Heart right ventricle (tissue), 16 donors: ENCODE measurements at regions of chr12 and their contacts with region 1.

Region 1: DNA sequence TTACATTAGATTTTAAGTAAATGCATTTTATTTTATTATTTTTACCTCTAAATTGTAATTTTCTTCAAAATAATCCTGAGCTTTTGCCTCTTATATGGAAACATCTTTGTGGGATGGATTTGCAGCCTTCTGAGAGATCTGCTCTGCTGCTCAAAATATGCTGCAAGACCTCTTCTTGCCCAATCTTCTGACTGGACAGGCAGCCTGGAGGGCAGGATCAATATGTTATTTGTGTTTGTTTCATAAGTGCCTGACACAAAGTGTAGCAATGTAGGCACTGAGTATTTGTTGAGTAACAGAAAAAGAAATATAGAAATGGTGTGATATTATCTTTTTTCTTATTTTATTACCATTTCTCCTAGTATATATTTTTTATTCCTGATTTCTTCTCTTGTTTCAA is 1106.9 kb downstream of the TMTC2 start:
- DNase-seq: no peak
- ATAC-seq: no peak
- H3K4me3 ChIP-seq: no peak overlapping the region
- H3K27ac ChIP-seq: no peak overlapping the region
- H3K4me1 ChIP-seq: no peaks in the 10 kb centered on the region
- H3K27me3 ChIP-seq: no peaks in the 10 kb centered on the region
- CTCF ChIP-seq: no peak

Region 2: DNA sequence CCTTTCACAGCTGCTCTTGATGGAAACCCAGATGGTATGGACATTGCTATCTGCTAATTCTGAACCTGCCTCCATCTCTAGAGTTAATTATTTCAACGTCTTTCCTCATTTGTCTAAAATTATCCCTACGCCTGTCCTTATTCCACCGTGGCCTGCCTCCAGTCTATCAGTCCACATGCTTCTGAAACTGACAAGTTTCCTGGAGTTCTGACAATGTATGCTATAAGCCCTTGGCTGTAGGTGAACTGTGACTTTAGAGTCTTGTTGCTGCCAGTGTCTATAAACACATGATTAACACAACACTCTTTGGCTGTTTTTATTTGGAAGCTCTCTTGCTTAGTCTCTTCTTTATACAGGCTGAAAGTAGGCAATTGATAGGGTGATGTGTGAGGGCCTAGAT is 54.0 kb before region 1 on chr12:
- intact Hi-C with region 1: loop called in 1 of 10 experiments (anchors 5 kb)
- DNase-seq: peak in 1 of 2 donors; percentile 22
- ATAC-seq: peak; percentile 64 to 99 (median 77)
- H3K4me3 ChIP-seq: no peak overlapping the region
- H3K27ac ChIP-seq: peak overlapping the region in 1 of 10 donors; percentile 2
- H3K4me1 ChIP-seq: no peaks in the 10 kb centered on the region
- H3K27me3 ChIP-seq: no peaks in the 10 kb centered on the region
- CTCF ChIP-seq: no peak

Region 3: DNA sequence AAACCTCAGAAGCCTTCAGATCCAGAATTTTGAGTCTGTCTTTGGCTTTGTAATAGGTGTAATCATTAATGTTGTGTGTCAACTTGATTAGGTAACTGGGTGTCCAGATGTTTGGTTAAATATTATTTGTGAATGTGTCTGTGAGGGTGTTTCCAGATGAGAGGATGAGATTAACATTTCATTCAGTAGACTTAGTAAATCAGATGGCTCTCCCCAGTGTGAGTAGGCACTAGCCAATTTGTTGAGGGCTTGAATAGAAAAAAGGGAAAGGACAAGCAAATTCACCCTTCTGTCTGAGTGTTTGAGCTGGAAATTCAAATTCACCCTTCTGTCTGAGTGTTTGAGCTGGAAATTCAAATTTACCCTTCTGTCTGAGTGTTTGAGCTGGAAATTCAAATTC is 186.8 kb after region 1 on chr12:
- intact Hi-C with region 1: no loop called
- DNase-seq: no peak
- ATAC-seq: no peak
- H3K4me3 ChIP-seq: no peak overlapping the region
- H3K27ac ChIP-seq: no peak overlapping the region
- H3K4me1 ChIP-seq: no peaks in the 10 kb centered on the region
- H3K27me3 ChIP-seq: no peaks in the 10 kb centered on the region
- CTCF ChIP-seq: no peak